H1 (cell line): ENCODE measurements at regions of chr17 and their contacts with region 1.

Region 1: DNA sequence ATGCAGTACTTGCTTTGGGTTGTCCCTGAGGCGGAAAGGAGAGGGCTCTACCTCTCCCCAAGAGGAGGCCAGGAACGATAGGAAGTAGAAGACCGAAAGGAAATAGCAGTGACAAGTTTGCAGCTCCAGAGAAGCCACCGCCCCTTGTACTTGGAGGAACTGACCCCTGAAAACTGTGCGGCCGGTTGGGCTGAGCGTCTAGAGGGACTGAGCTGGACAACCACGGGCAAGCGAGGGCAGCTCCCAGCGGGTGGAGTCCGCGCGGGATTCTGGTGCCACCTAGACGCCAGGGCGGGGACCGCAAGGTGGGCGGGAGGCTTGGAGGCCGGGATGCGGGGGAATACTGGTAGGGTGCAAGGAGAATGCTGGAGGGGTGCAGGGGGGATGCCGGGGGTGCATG is 1.3 kb upstream of the SLC6A4 start:
- DNase-seq: peak; percentile 19 to 84
- H3K4me3 ChIP-seq: peak overlapping the region in 1 of 4 experiments; percentile 63; a peak in 3 of 8 replicates
- H3K27ac ChIP-seq: no peak overlapping the region
- H3K4me1 ChIP-seq: peaks cover 0 to 18% (median 15%) of the 10 kb centered on the region in 4 experiments; a peak in 5 of 7 replicates
- H3K27me3 ChIP-seq: peaks cover 32 to 63% (median 58%) of the 10 kb centered on the region in 4 experiments
- CTCF ChIP-seq: peak; percentile 43 to 62 (median 61)
- EP300 ChIP-seq: no peak
- POLR2A ChIP-seq: no peak
- RAD21 ChIP-seq: peak; percentile 57 to 76; a peak in 3 of 4 replicates

Region 2: DNA sequence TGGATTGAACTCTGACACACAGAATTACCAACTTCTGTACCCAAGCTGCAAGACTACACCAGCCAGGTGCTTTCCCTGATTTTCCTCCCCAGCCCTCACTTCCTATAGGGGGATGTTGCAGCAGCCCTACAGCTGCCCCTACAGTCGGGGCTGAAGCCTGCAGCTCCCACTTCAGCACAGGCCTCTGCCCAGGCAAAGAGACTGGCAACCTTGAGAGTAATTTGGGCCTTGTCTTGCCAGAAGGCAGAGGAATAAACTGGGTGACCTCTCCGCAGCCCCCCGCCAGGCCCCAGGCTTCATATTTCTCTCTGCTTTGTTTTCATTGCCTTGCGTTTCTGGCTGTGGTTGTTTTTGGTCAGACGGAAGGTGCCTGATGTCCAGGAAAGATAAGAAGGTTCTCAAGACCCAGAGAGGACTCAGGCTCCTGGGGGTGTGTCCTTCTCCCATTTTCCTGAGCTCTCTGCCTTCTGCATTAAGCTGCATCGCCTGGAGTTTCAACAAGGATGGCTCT is 33.2 kb before region 1 on chr17:
- CTCF ChIA-PET with region 1: interaction called, 11 read pairs
- POLR2A ChIA-PET with region 1: interaction called, 6 read pairs
- DNase-seq: peak; percentile 21 to 56
- H3K4me3 ChIP-seq: no peak overlapping the region
- H3K27ac ChIP-seq: no peak overlapping the region
- H3K4me1 ChIP-seq: no peaks in the 10 kb centered on the region
- H3K27me3 ChIP-seq: no peaks in the 10 kb centered on the region
- CTCF ChIP-seq: peak; percentile 57 to 71 (median 67)
- EP300 ChIP-seq: no peak
- POLR2A ChIP-seq: no peak
- RAD21 ChIP-seq: peak; percentile 54 to 63

Region 3: GRCh38 chr17:30218799-30219198 is 18.0 kb before region 1 on chr17:
- CTCF ChIA-PET with region 1: interaction called, 11 read pairs
- POLR2A ChIA-PET with region 1: interaction called, 8 read pairs
- DNase-seq: no peak
- H3K4me3 ChIP-seq: no peak overlapping the region
- H3K27ac ChIP-seq: no peak overlapping the region
- H3K4me1 ChIP-seq: no peaks in the 10 kb centered on the region; a peak in 2 of 7 replicates
- H3K27me3 ChIP-seq: no peaks in the 10 kb centered on the region
- CTCF ChIP-seq: no peak
- EP300 ChIP-seq: no peak
- POLR2A ChIP-seq: no peak
- RAD21 ChIP-seq: no peak

Region 4: GRCh38 chr17:30258503-30258902 is 21.7 kb after region 1 on chr17:
- CTCF ChIA-PET with region 1: no interaction called
- POLR2A ChIA-PET with region 1: no interaction called
- DNase-seq: no peak
- H3K4me3 ChIP-seq: no peak overlapping the region
- H3K27ac ChIP-seq: no peak overlapping the region
- H3K4me1 ChIP-seq: no peaks in the 10 kb centered on the region
- H3K27me3 ChIP-seq: no peaks in the 10 kb centered on the region
- CTCF ChIP-seq: no peak
- EP300 ChIP-seq: no peak
- POLR2A ChIP-seq: no peak
- RAD21 ChIP-seq: no peak

Region 5: DNA sequence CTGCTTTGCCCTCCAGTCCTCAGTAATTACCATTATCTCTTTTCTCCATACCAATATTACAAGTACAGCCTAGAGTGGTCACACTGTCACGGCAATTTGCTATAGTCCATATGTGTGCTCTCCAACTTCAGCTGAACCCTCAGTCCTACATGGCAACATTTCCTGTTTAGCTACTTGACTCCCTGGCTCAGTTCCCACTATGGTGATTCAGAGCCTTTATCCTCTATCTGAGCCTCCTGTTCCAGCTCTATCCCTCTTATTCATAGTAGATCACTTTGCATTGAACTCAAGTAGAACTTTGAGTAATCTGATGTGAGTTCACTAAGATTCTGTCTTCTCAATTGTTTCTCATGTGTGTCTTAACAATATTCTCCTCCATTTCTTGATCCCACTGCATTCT is 196.7 kb after region 1 on chr17:
- CTCF ChIA-PET with region 1: no interaction called
- POLR2A ChIA-PET with region 1: no interaction called
- DNase-seq: no peak
- H3K4me3 ChIP-seq: no peak overlapping the region
- H3K27ac ChIP-seq: no peak overlapping the region
- H3K4me1 ChIP-seq: no peaks in the 10 kb centered on the region
- H3K27me3 ChIP-seq: no peaks in the 10 kb centered on the region
- CTCF ChIP-seq: no peak
- EP300 ChIP-seq: no peak
- POLR2A ChIP-seq: no peak
- RAD21 ChIP-seq: no peak